Esophagus muscularis mucosa (tissue), 4 donors: ENCODE measurements at regions of chr4 and their contacts with region 1.

Region 1: DNA sequence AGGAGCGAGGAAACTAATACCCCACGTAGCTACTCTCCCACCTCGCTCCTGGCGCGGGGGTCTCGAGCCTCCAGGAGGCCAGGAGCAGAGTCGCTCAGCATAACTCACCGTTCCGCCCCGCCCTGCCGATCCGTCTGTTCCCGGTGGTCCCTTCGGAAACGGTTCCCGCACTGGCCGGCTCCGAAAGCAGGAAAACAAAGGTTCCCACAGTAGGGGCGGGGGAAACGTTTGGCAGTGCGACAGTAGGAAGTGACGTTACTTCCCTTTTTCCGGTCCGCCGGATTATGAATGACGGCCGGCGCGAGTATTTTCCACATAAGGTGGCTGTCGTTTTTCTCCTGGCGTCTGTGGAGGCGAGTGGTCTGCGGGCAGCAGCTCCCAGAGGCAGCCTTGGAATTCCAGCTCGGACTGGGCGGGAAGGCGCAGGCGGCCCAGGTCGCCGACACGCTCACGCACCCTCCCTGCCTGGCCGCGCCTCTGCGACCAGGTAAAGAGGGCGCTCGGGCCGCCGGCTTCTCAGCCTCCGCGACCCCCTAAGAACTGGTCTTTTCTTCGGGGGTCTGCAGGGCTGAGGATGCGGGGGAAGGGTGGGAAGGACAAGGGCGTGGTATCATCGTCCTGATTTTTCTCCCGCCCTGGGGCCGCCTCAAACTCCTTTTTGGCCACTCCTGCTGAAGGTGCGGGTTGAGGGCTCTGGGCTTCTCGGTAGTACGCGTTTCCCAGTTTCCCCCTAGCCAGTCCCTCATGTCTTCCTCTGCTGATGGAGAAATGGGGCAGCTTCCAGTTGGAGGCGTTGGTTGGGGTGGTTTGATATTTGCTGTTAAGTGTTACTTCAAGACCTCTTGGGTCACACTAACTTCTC is at the starts of genes GSTCD and INTS12:
- DNase-seq: peak; percentile 98
- H3K4me3 ChIP-seq: peak within 1 kb of the TSS; percentile 72 to 92 (median 78)
- H3K27ac ChIP-seq: peak within 1 kb of the TSS; percentile 82 to 96 (median 86)
- H3K4me1 ChIP-seq: peaks cover 16 to 41% (median 31%) of the 10 kb centered on the region in 4 donors
- H3K27me3 ChIP-seq: no peaks in the 10 kb centered on the region
- CTCF ChIP-seq: peak in 1 of 3 experiments; percentile 20
- EP300 ChIP-seq: no peak
- POLR2A ChIP-seq: peak; percentile 58
- total RNA-seq, gene GSTCD: 5.2 to 14.5 (median 8.1) TPM
- total RNA-seq, gene INTS12: 19.1 to 24.5 (median 22.9) TPM

Region 2: DNA sequence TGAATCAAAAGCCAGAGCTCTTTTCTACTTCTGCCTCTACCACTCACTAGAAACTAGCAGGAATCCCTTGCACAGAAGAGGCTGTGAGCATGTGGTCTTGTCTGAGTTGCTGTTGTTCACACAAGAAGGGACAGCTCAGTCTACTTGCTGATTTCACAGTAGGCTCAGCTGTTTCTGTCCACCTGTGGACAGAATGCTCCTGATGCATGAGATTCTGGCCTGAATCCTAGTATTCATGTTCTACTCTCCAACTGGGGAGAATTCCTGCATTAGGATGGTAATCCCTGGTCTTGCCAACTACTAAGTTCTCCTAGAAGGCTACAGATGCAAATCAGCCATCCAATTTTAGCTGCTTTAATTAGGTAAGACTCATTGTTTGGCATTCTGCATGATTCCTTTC is 347.7 kb before region 1 on chr4:
- intact Hi-C with region 1: no loop called
- DNase-seq: no peak
- H3K4me3 ChIP-seq: no peak overlapping the region
- H3K27ac ChIP-seq: no peak overlapping the region
- H3K4me1 ChIP-seq: no peaks in the 10 kb centered on the region
- H3K27me3 ChIP-seq: no peaks in the 10 kb centered on the region
- CTCF ChIP-seq: no peak
- EP300 ChIP-seq: no peak
- POLR2A ChIP-seq: no peak

Region 3: GRCh38 chr4:106062452-106062875 is 353.7 kb after region 1 on chr4:
- intact Hi-C with region 1: loop called (anchors 10 kb)
- DNase-seq: no peak
- H3K4me3 ChIP-seq: no peak overlapping the region
- H3K27ac ChIP-seq: peak overlapping the region in 2 of 4 donors; percentile 12 to 27
- H3K4me1 ChIP-seq: peaks cover 0 to 44% (median 32%) of the 10 kb centered on the region in 4 donors
- H3K27me3 ChIP-seq: no peaks in the 10 kb centered on the region
- CTCF ChIP-seq: no peak
- EP300 ChIP-seq: no peak
- POLR2A ChIP-seq: no peak